ENCODE measurements at regions of chr1 and their contacts with region 1.

Region 1: GRCh38 chr1:223748773-223749733 is 36.7 kb downstream of the CAPN2 start:
- DNase-seq: peak; percentile 79
- ATAC-seq: peak; percentile 83
- H3K4me3 ChIP-seq: peak overlapping the region; percentile 42 to 69 (median 62)
- H3K4me3 Mint-ChIP-seq: peak overlapping the region; percentile 86
- H3K27ac ChIP-seq: no peak overlapping the region
- H3K27ac Mint-ChIP-seq: peak overlapping the region; percentile 27
- H3K4me1 ChIP-seq: peaks cover 7 to 9% of the 10 kb centered on the region in 2 donors
- H3K4me1 Mint-ChIP-seq: peaks cover 6% of the 10 kb centered on the region
- H3K27me3 ChIP-seq: peaks cover 0 to 5% (median 2%) of the 10 kb centered on the region in 4 experiments
- H3K27me3 Mint-ChIP-seq: no peaks in the 10 kb centered on the region
- CTCF ChIP-seq: peak; percentile 98

Region 2: GRCh38 chr1:223531742-223532341 is 217.2 kb before region 1 on chr1:
- CTCF ChIA-PET with region 1: no interaction called
- POLR2A ChIA-PET with region 1: no interaction called
- intact Hi-C with region 1: no loop called
- DNase-seq: no peak
- ATAC-seq: no peak
- H3K4me3 ChIP-seq: no peak overlapping the region
- H3K4me3 Mint-ChIP-seq: no peak overlapping the region
- H3K27ac ChIP-seq: no peak overlapping the region
- H3K27ac Mint-ChIP-seq: no peak overlapping the region
- H3K4me1 ChIP-seq: no peaks in the 10 kb centered on the region
- H3K4me1 Mint-ChIP-seq: no peaks in the 10 kb centered on the region
- H3K27me3 ChIP-seq: peaks cover 0 to 6% (median 0%) of the 10 kb centered on the region in 4 experiments
- H3K27me3 Mint-ChIP-seq: peaks cover 33% of the 10 kb centered on the region
- CTCF ChIP-seq: peak; percentile 33

Region 3: DNA sequence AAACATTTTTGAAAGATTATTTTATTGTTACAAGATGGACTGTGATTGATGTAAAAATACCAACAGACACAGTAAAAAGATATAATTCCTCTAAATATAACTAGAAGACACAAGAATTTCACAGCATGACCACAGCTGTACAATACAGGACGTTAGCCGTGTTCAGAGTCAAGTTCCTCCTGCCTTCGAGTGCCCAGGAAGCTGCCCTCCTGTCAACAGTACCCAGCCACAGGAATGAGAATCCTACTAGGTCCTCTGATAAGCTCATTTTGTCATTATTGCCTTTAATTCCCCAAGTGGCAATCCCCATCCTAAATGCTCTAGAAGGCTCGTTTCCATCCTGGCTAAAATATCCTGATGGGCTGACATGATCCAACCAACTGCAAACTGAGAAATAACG is 53.1 kb before region 1 on chr1:
- CTCF ChIA-PET with region 1: interaction called, 148 read pairs
- POLR2A ChIA-PET with region 1: no interaction called
- intact Hi-C with region 1: loop called (anchors 1 kb)
- DNase-seq: no peak
- ATAC-seq: no peak
- H3K4me3 ChIP-seq: no peak overlapping the region
- H3K4me3 Mint-ChIP-seq: no peak overlapping the region
- H3K27ac ChIP-seq: no peak overlapping the region
- H3K27ac Mint-ChIP-seq: no peak overlapping the region
- H3K4me1 ChIP-seq: peaks cover 4% of the 10 kb centered on the region in 2 donors
- H3K4me1 Mint-ChIP-seq: peaks cover 8% of the 10 kb centered on the region
- H3K27me3 ChIP-seq: no peaks in the 10 kb centered on the region
- H3K27me3 Mint-ChIP-seq: peaks cover 10% of the 10 kb centered on the region
- CTCF ChIP-seq: no peak

Region 4: GRCh38 chr1:223712194-223712849 is 36.7 kb before region 1 on chr1 and contains the start of gene CAPN2:
- CTCF ChIA-PET with region 1: interaction called, 78 read pairs
- POLR2A ChIA-PET with region 1: interaction called, 10 read pairs
- intact Hi-C with region 1: loop called (anchors 1 kb)
- DNase-seq: peak; percentile 73
- ATAC-seq: peak; percentile 72
- H3K4me3 ChIP-seq: peak within 1 kb of the TSS; percentile 23 to 87 (median 67)
- H3K4me3 Mint-ChIP-seq: peak within 1 kb of the TSS; percentile 88
- H3K27ac ChIP-seq: peak within 1 kb of the TSS; percentile 42 to 68
- H3K27ac Mint-ChIP-seq: peak within 1 kb of the TSS; percentile 84
- H3K4me1 ChIP-seq: peaks cover 47 to 53% of the 10 kb centered on the region in 2 donors
- H3K4me1 Mint-ChIP-seq: peaks cover 51% of the 10 kb centered on the region
- H3K27me3 ChIP-seq: no peaks in the 10 kb centered on the region
- H3K27me3 Mint-ChIP-seq: no peaks in the 10 kb centered on the region
- CTCF ChIP-seq: no peak
- total RNA-seq, gene CAPN2: 79.6 and 83.9 TPM in 2 replicates

Region 5: DNA sequence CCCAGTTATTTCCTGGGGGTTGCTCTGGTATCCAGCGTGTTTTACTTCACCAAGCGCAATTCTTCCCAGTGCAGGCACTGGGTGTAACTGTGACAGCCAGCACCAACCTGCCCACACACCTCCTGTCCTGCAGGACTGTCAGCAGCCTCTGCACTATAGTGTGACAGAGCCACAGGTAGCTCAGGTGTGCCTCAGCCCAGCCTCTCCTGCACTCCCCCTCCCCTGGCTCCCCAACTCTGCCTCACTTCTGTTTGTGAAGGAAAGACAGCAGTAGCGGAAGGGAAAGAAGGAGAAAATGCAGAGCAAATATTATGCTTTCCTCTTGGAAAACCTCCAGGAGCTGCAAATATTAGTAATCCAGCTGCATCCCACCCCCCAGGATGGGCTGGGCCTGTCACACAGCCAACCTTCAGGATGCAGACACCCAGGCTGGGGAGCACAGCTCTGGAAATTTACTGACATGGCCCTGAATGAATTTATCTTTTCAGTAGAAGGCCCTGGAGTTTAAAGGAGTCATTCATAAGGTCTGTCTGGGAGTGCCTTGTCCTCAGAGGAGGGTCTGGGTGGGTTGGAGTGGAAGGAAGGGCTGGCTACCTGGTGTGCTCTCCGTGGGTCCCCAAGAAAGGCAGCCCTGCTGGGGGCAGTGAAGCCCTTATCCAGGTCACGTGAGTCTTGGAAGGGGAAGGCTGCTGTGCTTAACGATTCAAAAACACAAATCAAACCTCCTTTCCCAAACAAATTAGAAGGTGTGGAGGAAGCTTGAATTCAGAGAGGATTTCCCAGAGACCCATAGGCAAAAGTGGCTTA is 15.9 kb before region 1 on chr1:
- CTCF ChIA-PET with region 1: interaction called, 26 read pairs
- POLR2A ChIA-PET with region 1: no interaction called
- intact Hi-C with region 1: no loop called
- DNase-seq: no peak
- ATAC-seq: no peak
- H3K4me3 ChIP-seq: no peak overlapping the region
- H3K4me3 Mint-ChIP-seq: no peak overlapping the region
- H3K27ac ChIP-seq: no peak overlapping the region
- H3K27ac Mint-ChIP-seq: no peak overlapping the region
- H3K4me1 ChIP-seq: no peaks in the 10 kb centered on the region
- H3K4me1 Mint-ChIP-seq: no peaks in the 10 kb centered on the region
- H3K27me3 ChIP-seq: no peaks in the 10 kb centered on the region
- H3K27me3 Mint-ChIP-seq: no peaks in the 10 kb centered on the region
- CTCF ChIP-seq: no peak

Region 6: GRCh38 chr1:223776075-223776814 is 27.2 kb after region 1 on chr1:
- CTCF ChIA-PET with region 1: interaction called, 17 read pairs
- POLR2A ChIA-PET with region 1: no interaction called
- intact Hi-C with region 1: no loop called
- DNase-seq: no peak
- ATAC-seq: peak; percentile 53
- H3K4me3 ChIP-seq: no peak overlapping the region
- H3K4me3 Mint-ChIP-seq: no peak overlapping the region
- H3K27ac ChIP-seq: no peak overlapping the region
- H3K27ac Mint-ChIP-seq: peak overlapping the region; percentile 67
- H3K4me1 ChIP-seq: no peaks in the 10 kb centered on the region
- H3K4me1 Mint-ChIP-seq: peaks cover 13% of the 10 kb centered on the region
- H3K27me3 ChIP-seq: no peaks in the 10 kb centered on the region
- H3K27me3 Mint-ChIP-seq: no peaks in the 10 kb centered on the region
- CTCF ChIP-seq: no peak

Measured in B cell (primary cell).